ENCODE measurements at regions of chr2 and their contacts with region 1.

Region 1: DNA sequence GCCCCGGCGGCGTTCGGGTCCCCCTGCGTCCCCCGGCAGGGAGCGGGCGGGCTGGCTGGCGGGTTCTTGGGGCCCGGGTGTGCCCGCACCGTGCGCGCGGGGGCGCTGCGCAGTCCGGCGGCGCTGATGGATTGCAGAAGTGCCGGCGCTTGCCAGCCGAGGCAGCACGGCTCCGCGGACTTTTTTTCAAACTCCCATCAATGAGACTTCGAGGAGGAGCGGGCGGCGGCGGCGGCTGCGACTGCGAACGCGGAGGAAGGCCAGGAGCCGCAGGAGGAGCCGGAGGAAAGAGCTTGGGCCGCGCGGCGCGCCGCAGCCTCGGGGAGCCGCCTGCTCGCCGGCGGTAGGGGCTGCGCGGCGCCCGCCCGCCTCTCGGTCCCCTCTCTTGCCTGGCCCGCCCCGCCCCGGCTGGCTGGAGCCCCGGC is at the start of gene GLI2:
- DNase-seq: no peak
- total RNA-seq, gene GLI2: 1.8 TPM

Region 2: DNA sequence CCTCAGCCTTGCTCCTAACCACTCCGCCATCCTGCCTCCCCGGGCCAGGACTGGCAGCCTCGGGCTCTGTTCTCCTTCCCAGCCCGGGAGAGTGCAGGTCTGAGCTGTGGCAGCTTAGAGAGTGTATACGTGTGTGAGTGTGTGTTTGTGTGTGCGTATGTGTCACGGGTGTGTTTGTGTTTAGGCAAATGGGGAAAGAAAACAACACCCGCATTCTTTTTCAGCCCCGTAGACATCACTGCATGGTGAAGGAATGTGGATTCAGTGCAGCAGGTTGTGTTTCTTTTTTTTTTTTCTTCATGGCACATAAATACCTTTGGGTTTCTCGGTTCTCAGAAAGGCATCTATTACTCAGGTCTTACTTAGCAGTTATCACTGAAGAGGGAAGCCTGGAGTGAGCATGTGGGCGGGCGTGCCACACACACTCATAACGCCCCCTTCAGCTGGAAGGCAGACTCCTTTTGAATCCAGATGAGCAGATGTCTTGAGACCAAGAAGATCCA is 44.1 kb after region 1 on chr2:
- intact Hi-C with region 1: no loop called
- DNase-seq: no peak

Region 3: GRCh38 chr2:120825370-120826259 is 89.9 kb after region 1 on chr2:
- intact Hi-C with region 1: loop called (anchors 5 kb)
- DNase-seq: no peak

Region 4: DNA sequence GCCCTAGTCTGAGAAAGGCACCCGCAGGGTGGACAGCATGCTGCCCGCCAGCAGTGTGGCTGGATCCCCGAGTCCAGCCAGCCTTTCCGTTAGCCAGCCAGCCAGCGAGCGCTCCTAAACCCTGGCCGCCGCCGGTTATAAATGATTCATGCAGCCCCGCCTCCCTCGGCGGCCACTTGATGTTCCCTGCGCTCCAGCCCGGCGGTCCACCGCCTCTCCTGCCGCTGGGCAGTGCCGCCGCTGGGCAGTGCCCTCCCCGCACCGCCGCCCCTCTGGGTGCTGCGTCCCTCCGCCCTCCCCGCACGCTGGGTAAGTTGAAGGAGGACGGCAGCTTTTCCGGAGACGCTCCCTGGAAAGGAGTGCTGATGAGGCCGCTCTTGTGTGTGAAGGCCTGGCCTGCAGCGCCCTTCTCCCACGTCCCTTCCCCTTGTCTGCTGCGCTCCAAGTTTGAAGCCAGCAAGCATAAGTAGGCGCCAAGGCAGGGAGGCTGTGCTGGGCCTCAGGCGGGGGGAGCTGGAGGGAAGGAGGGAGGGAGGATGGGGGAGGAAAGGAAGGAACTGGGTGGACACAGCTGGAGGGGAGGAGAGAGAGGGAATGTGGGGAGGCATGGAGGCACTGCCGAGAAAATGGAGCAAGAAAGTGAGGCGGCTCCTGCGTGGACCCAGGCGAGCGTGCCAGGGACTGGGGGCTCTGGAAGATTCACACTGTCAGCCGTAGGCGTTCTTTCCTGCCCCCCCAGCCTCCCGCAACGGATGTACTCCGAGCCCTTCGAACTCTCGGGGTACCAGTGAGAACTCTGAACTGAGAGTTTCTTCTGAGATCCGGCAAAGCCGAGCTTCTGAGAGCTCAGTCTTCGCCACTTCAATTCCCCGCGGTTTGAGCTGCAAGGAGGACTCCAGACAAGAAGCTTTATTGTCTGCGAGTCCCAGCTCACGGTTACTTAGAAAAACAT is 131.8 kb after region 1 on chr2:
- intact Hi-C with region 1: loop called (anchors 2 kb)
- DNase-seq: no peak

Region 5: DNA sequence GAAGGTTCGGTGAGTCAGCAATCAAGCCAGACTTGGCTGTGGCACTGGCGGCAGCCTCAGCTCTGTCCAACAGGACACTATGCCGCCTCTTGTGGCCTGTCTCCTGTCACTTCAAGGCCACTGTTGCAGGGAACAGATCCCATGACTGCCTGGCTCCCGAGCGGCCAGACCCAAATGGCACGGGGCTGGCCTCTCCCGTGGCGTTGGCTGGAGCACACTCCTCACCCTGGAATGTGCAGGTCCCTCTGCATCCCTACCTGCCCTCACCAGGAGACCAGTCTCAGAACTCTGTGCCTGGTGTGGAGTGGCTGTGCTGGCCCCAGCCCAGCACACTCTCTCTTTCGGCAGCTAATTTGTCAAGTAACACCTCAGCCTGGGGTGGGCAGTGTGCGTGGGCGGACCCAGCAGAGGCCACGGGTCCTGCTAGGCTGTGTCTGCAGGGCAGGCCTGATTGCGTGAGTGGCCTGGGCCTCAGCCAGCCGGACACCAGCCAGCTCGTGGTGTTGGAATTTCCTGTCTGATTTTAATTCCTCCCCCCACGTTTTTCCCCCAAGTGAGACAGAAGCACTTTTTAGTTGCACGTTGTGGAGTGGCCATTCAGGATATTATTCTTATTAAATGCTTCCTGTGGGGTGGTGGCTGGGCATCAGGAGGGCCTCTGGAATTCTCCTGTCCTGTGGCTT is 179.2 kb after region 1 on chr2:
- intact Hi-C with region 1: loop called (anchors 5 kb)
- DNase-seq: peak; percentile 91

Region 6: GRCh38 chr2:120949027-120949956 is 213.5 kb after region 1 on chr2:
- intact Hi-C with region 1: loop called (anchors 5 kb)
- DNase-seq: no peak

Region 7: DNA sequence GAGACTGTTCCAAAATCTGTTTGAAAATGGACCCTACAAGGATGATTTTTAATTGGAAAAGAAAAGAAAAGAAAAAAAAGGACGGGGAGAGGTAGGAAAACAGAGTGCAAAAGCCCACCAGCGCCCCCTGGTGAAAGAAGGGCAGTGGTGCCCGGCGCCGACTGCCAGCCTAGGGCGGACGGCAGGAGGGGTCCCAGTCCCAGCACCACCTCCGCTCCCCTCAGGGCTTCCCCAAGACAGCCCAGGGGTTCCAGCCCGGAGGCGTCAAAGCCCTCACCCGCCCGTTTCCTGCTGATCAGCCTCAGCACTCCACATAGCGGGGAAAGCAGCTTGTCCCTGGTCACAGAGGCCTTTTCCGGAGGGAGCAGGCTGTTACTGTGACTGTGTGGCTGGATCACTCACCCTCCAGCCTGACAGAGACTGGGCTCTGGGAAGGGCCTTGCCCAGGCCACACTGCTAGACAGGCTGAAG is 335.3 kb after region 1 on chr2:
- intact Hi-C with region 1: loop called (anchors 5 kb)
- DNase-seq: peak; percentile 84